ENCODE measurements at regions of chr3 and their contacts with region 1.

Region 1: DNA sequence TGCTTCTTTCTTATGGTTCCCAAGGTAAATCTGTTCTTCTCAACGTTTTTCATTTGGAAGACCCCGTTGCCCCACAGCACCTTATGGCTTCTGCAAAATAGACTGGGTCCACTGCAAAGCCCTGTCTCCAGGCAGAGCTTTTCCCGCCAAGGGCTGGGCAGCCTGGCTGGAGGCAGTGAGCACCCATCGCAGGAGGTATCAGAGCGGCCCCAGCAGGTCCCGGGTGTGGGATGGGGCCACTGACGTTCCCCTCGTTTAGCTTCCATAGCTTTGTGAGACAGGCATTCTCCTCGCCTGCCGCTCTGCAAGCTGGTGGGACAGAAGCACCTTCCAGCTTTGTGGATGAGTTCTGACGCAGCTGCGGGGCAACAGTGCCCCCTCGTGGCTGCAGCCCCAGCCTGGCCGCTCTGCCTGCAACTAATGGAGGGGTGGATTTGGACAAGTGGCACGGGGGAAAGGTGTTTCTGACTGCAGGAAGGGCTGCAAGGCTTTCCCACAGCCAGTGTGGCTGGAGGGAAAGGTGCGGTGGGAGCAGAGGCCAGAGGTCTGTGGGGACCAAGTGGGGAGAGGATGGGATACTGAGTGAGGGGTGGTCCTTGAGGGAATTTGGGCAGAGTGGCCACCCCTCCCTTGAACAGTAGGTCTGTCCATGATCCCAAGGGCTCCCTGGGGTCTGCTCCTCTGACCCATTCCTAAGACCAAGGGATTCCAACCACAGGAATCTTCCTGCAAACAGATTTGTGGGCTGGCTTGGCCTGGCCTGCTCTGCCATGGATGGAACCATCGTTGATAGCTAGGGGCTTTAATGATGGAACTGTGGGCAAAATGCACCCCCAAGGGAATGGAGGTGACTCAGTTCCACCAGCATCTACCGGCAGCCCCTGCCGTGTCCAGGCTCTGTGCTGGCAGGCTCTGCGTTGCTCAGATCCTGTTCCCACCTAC is 99.4 kb downstream of the FBLN2 start:
- DNase-seq: peak; percentile 96
- ATAC-seq: peak; percentile 77
- H3K4me3 Mint-ChIP-seq: no peak overlapping the region
- H3K27ac Mint-ChIP-seq: peak overlapping the region; percentile 93
- H3K4me1 Mint-ChIP-seq: peaks cover 20% of the 10 kb centered on the region
- H3K27me3 Mint-ChIP-seq: peaks cover 7% of the 10 kb centered on the region
- CTCF ChIP-seq: peak; percentile 96

Region 2: GRCh38 chr3:13346481-13347389 is 301.6 kb before region 1 on chr3:
- CTCF ChIA-PET with region 1: interaction called, 14 read pairs
- POLR2A ChIA-PET with region 1: no interaction called
- DNase-seq: peak; percentile 58
- ATAC-seq: peak; percentile 68
- H3K4me3 Mint-ChIP-seq: peak overlapping the region; percentile 59
- H3K27ac Mint-ChIP-seq: peak overlapping the region; percentile 97
- H3K4me1 Mint-ChIP-seq: peaks cover 73% of the 10 kb centered on the region
- H3K27me3 Mint-ChIP-seq: no peaks in the 10 kb centered on the region
- CTCF ChIP-seq: no peak

Region 3: GRCh38 chr3:13484851-13485590 is 163.3 kb before region 1 on chr3:
- CTCF ChIA-PET with region 1: interaction called, 42 read pairs
- POLR2A ChIA-PET with region 1: interaction called, 3 read pairs
- DNase-seq: peak; percentile 12
- ATAC-seq: no peak
- H3K4me3 Mint-ChIP-seq: no peak overlapping the region
- H3K27ac Mint-ChIP-seq: no peak overlapping the region; the same call in 1 of the 2 replicates
- H3K4me1 Mint-ChIP-seq: peaks cover 17% of the 10 kb centered on the region
- H3K27me3 Mint-ChIP-seq: peaks cover 10% of the 10 kb centered on the region
- CTCF ChIP-seq: no peak

Region 4: GRCh38 chr3:13507769-13508339 is 140.5 kb before region 1 on chr3:
- CTCF ChIA-PET with region 1: interaction called, 24 read pairs
- POLR2A ChIA-PET with region 1: no interaction called
- DNase-seq: no peak
- ATAC-seq: peak; percentile 65
- H3K4me3 Mint-ChIP-seq: no peak overlapping the region
- H3K27ac Mint-ChIP-seq: no peak overlapping the region
- H3K4me1 Mint-ChIP-seq: peaks cover 9% of the 10 kb centered on the region
- H3K27me3 Mint-ChIP-seq: no peaks in the 10 kb centered on the region
- CTCF ChIP-seq: no peak

Region 5: DNA sequence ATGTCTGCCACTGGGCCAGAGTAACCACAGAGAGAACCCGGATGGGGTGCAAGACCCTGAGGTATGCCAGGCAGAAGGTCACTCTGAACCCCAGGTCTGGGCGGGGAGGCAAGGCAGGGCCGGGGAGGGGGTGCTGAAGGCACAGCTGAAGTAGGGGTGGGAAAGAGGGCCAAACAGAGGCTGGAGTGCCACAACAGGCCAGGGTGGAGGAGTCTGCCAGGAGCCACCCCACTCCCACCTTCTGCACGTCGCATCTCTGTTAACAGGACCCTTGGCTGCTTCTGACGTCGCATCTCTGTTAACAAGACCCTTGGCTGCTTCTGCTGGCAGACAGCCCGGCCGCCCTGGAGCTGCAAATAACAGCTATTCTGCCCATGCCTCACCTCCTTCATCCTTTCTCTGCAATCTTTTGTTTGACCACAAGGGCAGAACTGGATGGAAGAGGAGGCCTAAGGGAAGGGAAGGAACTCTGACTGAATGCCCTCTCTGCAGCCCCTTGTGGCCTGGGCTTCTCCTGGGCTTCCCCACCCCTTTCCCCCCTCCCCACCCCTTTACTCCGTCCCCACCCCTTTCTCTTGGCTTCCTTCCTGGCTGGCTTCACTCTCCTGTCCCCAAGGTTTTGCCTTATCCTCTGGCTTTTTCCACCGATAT is 120.0 kb before region 1 on chr3:
- CTCF ChIA-PET with region 1: interaction called, 29 read pairs
- POLR2A ChIA-PET with region 1: no interaction called
- DNase-seq: peak; percentile 55
- ATAC-seq: peak; percentile 98
- H3K4me3 Mint-ChIP-seq: no peak overlapping the region
- H3K27ac Mint-ChIP-seq: no peak overlapping the region
- H3K4me1 Mint-ChIP-seq: peaks cover 30% of the 10 kb centered on the region
- H3K27me3 Mint-ChIP-seq: no peaks in the 10 kb centered on the region; the same call in 1 of the 2 replicates
- CTCF ChIP-seq: no peak; the same call in 1 of the 2 replicates

Region 6: DNA sequence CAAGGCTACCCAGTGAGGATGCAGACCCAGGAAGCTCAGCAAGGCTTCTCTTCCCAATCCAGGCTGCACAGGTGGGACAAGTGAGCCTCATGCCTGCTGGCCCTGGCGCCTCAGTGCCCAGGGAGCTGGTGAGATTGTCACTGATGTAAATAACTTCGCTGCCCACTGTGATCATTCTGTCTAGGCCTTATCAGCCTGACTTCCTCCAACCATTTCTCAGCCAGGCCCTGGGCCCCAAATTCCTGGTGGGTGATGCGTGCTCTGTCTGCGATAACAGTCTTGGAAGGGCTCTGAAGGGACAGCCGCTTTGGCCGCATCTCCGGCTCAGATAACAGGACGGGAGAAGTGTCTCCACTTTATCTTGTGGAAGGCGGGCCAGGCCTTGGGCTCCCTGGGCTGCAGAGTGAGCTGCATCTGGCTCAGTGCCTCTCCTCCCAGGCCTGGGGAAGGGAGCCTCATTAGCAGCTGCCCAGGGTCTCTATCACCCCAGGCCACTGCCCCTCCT is 101.6 kb before region 1 on chr3:
- CTCF ChIA-PET with region 1: interaction called, 14 read pairs
- POLR2A ChIA-PET with region 1: no interaction called
- DNase-seq: no peak
- ATAC-seq: no peak
- H3K4me3 Mint-ChIP-seq: no peak overlapping the region
- H3K27ac Mint-ChIP-seq: no peak overlapping the region
- H3K4me1 Mint-ChIP-seq: peaks cover 27% of the 10 kb centered on the region
- H3K27me3 Mint-ChIP-seq: peaks cover 18% of the 10 kb centered on the region
- CTCF ChIP-seq: no peak

Region 7: GRCh38 chr3:13633176-13633575 is 15.2 kb before region 1 on chr3:
- CTCF ChIA-PET with region 1: interaction called, 19 read pairs
- POLR2A ChIA-PET with region 1: interaction called, 3 read pairs
- DNase-seq: no peak
- ATAC-seq: no peak
- H3K4me3 Mint-ChIP-seq: no peak overlapping the region
- H3K27ac Mint-ChIP-seq: peak overlapping the region; percentile 36; the same call in 1 of the 2 replicates
- H3K4me1 Mint-ChIP-seq: no peaks in the 10 kb centered on the region
- H3K27me3 Mint-ChIP-seq: no peaks in the 10 kb centered on the region
- CTCF ChIP-seq: no peak